Colonic mucosa (tissue), 4 donors: ENCODE measurements at regions of chr2 and their contacts with region 1.

Region 1: DNA sequence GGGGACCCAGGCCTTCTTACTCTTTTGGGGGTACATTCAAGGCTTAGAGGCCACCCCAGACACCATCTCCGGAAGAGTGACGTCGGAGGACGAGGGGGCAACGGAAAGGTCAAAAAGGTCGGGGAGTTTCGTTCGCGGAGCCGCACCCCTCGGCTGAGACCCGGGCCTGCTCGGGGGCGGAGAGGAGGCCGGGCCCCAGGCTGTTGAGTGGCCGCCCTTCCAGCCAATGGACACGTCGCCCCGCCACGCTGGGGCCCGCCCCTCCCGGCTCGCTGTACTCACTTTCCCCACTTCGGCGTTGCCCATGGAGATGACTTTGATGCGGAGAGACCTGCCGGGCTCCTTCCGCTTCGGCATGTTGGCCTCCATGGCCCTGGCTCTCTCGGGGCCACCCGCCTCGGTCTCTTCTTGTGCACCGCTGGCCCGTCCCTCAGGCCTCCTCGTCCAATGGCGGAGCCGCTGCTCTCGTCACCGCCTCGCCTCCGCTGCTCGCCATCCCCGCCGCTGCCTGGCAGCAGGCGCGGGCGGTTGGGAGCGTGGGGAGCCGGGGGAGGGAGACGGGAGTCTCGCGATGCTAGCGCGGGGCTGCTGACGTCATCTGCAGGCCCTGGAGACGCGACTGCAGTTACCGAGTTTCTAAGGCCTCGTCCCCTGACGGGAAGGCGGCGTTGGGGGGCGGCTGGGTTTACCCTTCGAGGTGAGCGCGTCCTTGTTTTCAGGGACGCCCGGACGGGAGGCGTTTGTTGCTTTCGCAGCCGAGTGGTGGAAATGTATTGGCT is at the start of gene DNAJC27:
- DNase-seq: peak; percentile 97
- H3K4me3 ChIP-seq: peak within 1 kb of the TSS; percentile 71
- H3K27ac ChIP-seq: peak within 1 kb of the TSS; percentile 98
- H3K4me1 ChIP-seq: no peaks in the 10 kb centered on the region
- H3K27me3 ChIP-seq: no peaks in the 10 kb centered on the region
- CTCF ChIP-seq: no peak
- total RNA-seq, gene DNAJC27: 3.4 to 3.9 TPM

Region 2: DNA sequence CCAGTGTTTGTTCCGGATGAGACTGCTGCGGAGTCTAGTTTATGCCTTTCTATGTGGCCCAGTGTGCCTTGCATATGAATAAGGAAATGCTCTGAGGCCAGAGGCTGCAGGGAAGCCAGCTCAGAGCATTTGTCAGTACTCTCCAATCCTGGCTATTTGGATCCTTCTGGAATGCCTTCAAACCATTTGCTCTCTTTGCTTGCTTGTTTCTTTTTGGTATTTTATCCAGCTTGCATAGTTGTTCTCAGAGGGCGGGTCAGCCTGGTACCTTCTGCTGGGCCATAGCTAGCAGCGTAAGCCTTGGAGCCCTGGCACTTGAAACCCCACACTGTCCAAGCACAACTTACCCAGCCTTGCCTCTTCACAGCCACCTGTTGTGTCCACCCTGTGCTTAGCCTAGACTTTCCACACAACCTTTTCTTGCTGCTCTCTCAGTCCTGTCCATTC is 158.0 kb before region 1 on chr2:
- intact Hi-C with region 1: no loop called
- DNase-seq: peak; percentile 8
- H3K4me3 ChIP-seq: no peak overlapping the region
- H3K27ac ChIP-seq: no peak overlapping the region
- H3K4me1 ChIP-seq: no peaks in the 10 kb centered on the region
- H3K27me3 ChIP-seq: no peaks in the 10 kb centered on the region
- CTCF ChIP-seq: no peak

Region 3: GRCh38 chr2:25076749-25077148 is 105.0 kb after region 1 on chr2:
- intact Hi-C with region 1: no loop called
- DNase-seq: no peak
- H3K4me3 ChIP-seq: no peak overlapping the region
- H3K27ac ChIP-seq: no peak overlapping the region
- H3K4me1 ChIP-seq: no peaks in the 10 kb centered on the region
- H3K27me3 ChIP-seq: no peaks in the 10 kb centered on the region
- CTCF ChIP-seq: no peak

Region 4: GRCh38 chr2:25127646-25128045 is 155.9 kb after region 1 on chr2:
- intact Hi-C with region 1: loop called (anchors 1 kb)
- DNase-seq: no peak
- H3K4me3 ChIP-seq: no peak overlapping the region
- H3K27ac ChIP-seq: no peak overlapping the region
- H3K4me1 ChIP-seq: no peaks in the 10 kb centered on the region
- H3K27me3 ChIP-seq: peaks cover 4% of the 10 kb centered on the region
- CTCF ChIP-seq: no peak

Region 5: DNA sequence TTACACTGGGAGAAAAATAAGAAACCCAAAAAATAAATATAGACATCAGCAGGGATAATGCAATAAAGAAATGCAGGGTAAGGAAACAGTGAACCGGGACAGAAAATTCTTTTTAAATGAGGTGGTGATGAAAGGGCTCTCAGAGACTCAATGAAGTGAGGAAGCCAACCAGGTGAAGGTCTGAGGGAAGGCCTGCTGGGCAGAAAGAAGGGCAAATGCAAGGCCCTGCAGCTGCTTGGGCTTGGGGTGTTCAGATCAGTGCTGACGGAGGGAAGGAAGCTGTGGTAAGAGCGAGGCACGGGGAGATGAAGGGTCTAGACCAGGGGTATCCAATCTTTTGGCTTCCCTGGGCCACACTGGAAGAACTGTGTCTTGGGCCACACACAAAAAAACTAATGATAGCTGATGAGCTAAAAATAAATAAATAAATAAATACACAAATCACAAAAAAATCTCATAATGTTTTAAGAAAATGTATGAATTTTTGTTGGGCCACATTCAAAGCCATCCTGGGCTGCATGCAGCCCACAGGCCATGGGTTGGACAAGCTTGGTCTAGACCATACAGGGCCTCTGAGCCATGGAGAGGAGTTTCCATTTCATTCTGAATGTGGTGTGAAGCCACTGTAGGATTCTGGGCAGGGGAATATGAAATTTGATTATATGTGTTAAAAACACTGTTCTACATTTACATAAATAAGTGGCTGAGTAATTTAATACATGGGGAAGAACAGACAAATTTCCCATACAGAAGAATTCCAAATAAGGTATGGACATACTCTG is 466.3 kb after region 1 on chr2:
- intact Hi-C with region 1: no loop called
- DNase-seq: no peak
- H3K4me3 ChIP-seq: no peak overlapping the region
- H3K27ac ChIP-seq: no peak overlapping the region
- H3K4me1 ChIP-seq: no peaks in the 10 kb centered on the region
- H3K27me3 ChIP-seq: no peaks in the 10 kb centered on the region
- CTCF ChIP-seq: no peak